Dendritic cell treated with granulocyte-macrophage colony-stimulating factor and Interleukin-4, amounts not matched to agents 40 ng/mL and 50 ng/mL, for 4 days (primary cell): ENCODE measurements at regions of chr14 and their contacts with region 1.

Region 1: GRCh38 chr14:24093901-24094761 is at the start of gene PCK2:
- H3K4me3 Mint-ChIP-seq: peak within 1 kb of the TSS; percentile 90
- H3K27ac Mint-ChIP-seq: peak within 1 kb of the TSS; percentile 88
- H3K4me1 Mint-ChIP-seq: peaks cover 63% of the 10 kb centered on the region
- H3K27me3 Mint-ChIP-seq: no peaks in the 10 kb centered on the region

Region 2: GRCh38 chr14:23567192-23568020 is 526.7 kb before region 1 on chr14 and contains the start of gene AP1G2:
- intact Hi-C with region 1: loop called (anchors 5 kb)
- H3K4me3 Mint-ChIP-seq: peak within 1 kb of the TSS; percentile 97
- H3K27ac Mint-ChIP-seq: peak within 1 kb of the TSS; percentile 92
- H3K4me1 Mint-ChIP-seq: peaks cover 89% of the 10 kb centered on the region
- H3K27me3 Mint-ChIP-seq: no peaks in the 10 kb centered on the region

Region 3: DNA sequence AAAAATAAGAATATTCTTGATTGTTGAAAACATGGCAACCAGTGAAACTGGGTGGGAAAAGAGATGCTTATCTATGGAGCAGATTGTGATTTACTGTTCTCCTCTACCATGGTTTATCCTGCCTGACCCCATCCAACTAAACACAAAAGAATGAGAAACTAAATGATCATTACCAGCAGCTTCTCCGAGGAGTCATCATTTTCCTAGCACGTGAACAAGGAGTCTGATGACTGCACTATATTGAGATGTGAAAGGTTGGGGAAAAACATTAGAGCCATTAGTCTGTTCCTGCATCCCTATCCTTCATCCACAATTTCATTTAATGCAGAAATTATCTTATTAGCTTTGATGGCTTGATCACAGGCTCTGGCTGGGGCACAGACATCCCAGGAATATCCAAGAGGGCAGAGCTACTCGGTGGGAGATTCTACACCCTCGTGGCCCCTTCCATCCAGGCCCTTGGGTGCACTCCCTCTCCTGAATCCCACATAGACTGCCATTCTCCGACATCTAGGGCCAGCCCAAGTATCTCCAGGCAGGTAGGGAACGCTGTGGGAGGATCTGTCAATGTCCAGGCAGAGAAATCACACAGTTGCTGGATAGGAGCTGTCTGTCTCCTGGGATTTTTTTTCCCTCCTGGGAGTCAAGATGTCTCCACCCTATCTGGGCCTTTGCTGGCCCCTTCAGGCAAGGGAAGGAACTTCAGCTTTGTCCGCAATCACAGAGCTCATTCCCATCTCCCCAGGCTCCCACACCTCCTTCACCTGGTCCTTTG is 183.8 kb before region 1 on chr14:
- intact Hi-C with region 1: no loop called
- H3K4me3 Mint-ChIP-seq: no peak overlapping the region
- H3K27ac Mint-ChIP-seq: no peak overlapping the region
- H3K4me1 Mint-ChIP-seq: peaks cover 5% of the 10 kb centered on the region
- H3K27me3 Mint-ChIP-seq: peaks cover 4% of the 10 kb centered on the region

Region 4: GRCh38 chr14:24013654-24014514 is 80.2 kb before region 1 on chr14:
- intact Hi-C with region 1: loop called (anchors 1 kb)
- H3K4me3 Mint-ChIP-seq: no peak overlapping the region
- H3K27ac Mint-ChIP-seq: no peak overlapping the region
- H3K4me1 Mint-ChIP-seq: peaks cover 48% of the 10 kb centered on the region
- H3K27me3 Mint-ChIP-seq: no peaks in the 10 kb centered on the region

Region 5: DNA sequence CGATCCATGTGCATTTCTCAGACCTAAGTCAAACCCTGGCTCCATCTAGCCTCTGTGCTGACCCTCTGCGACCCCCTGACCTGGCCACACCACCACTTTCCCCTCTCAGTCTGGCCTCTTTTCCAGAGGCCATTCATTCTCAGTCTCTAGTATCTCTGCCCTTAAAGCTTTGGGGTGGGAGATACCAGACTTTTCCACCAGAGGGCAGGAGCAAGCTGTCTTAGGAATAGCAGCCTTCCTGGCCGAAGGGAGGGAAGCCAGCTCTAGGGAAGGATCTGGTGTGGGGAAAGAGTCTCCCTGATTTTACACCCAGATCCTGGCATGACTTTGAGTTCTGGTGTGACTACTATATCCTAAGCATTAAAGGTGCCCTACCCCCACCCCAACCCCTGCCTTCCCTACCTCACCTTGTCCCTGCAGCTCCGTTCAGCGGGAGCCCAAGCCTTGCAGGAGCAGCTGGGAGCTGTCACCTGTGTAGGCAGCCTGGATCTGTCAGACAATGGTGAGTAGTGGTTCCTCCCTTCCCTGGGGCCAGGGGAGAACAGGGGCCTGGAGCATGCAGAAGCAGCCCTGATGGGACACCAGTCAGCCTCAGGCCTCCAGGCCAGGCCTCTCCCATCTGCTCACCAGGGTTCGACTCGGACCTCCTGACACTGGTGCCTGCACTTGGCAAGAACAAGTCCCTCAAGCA is 35.7 kb before region 1 on chr14:
- intact Hi-C with region 1: loop called (anchors 1 kb)
- H3K4me3 Mint-ChIP-seq: no peak overlapping the region
- H3K27ac Mint-ChIP-seq: no peak overlapping the region
- H3K4me1 Mint-ChIP-seq: peaks cover 5% of the 10 kb centered on the region
- H3K27me3 Mint-ChIP-seq: peaks cover 30% of the 10 kb centered on the region